ENCODE measurements at regions of chr1 and their contacts with region 1.

Region 1: GRCh38 chr1:65002508-65003315 is 36.4 kb upstream of the JAK1 start:
- DNase-seq: peak; percentile 81
- H3K4me3 Mint-ChIP-seq: peak overlapping the region; percentile 82
- H3K27ac Mint-ChIP-seq: peak overlapping the region; percentile 88
- H3K4me1 Mint-ChIP-seq: peaks cover 35% of the 10 kb centered on the region
- H3K27me3 Mint-ChIP-seq: no peaks in the 10 kb centered on the region

Region 2: GRCh38 chr1:64898107-64898845 is 104.4 kb before region 1 on chr1:
- CTCF ChIA-PET with region 1: no interaction called
- intact Hi-C with region 1: loop called (anchors 5 kb)
- DNase-seq: peak; percentile 68
- H3K4me3 Mint-ChIP-seq: no peak overlapping the region
- H3K27ac Mint-ChIP-seq: no peak overlapping the region
- H3K4me1 Mint-ChIP-seq: peaks cover 92% of the 10 kb centered on the region
- H3K27me3 Mint-ChIP-seq: no peaks in the 10 kb centered on the region

Region 3: GRCh38 chr1:64980745-64981600 is 21.7 kb before region 1 on chr1:
- CTCF ChIA-PET with region 1: interaction called, 3 read pairs
- intact Hi-C with region 1: loop called (anchors 1 kb)
- DNase-seq: no peak
- H3K4me3 Mint-ChIP-seq: no peak overlapping the region
- H3K27ac Mint-ChIP-seq: no peak overlapping the region
- H3K4me1 Mint-ChIP-seq: peaks cover 18% of the 10 kb centered on the region
- H3K27me3 Mint-ChIP-seq: no peaks in the 10 kb centered on the region

Region 4: GRCh38 chr1:65049941-65050713 is 47.4 kb after region 1 on chr1:
- CTCF ChIA-PET with region 1: no interaction called
- intact Hi-C with region 1: loop called (anchors 2 kb)
- DNase-seq: peak; percentile 38
- H3K4me3 Mint-ChIP-seq: peak overlapping the region; percentile 10
- H3K27ac Mint-ChIP-seq: peak overlapping the region; percentile 17
- H3K4me1 Mint-ChIP-seq: peaks cover 47% of the 10 kb centered on the region
- H3K27me3 Mint-ChIP-seq: no peaks in the 10 kb centered on the region

Region 5: GRCh38 chr1:65075123-65075976 is 72.6 kb after region 1 on chr1:
- CTCF ChIA-PET with region 1: interaction called, 10 read pairs
- intact Hi-C with region 1: no loop called
- DNase-seq: peak; percentile 84
- H3K4me3 Mint-ChIP-seq: no peak overlapping the region
- H3K27ac Mint-ChIP-seq: no peak overlapping the region
- H3K4me1 Mint-ChIP-seq: peaks cover 20% of the 10 kb centered on the region
- H3K27me3 Mint-ChIP-seq: no peaks in the 10 kb centered on the region